ENCODE measurements at regions of chr4 and their contacts with region 1.

Region 1: GRCh38 chr4:142353149-142353738 is 492.9 kb downstream of the INPP4B start:
- DNase-seq: no peak
- ATAC-seq: peak; percentile 34
- H3K4me3 Mint-ChIP-seq: no peak overlapping the region
- H3K27ac Mint-ChIP-seq: peak overlapping the region; percentile 84
- H3K4me1 Mint-ChIP-seq: peaks cover 94% of the 10 kb centered on the region
- H3K27me3 Mint-ChIP-seq: no peaks in the 10 kb centered on the region
- CTCF ChIP-seq: peak; percentile 96

Region 2: GRCh38 chr4:142081025-142081424 is 272.2 kb before region 1 on chr4:
- CTCF ChIA-PET with region 1: no interaction called
- POLR2A ChIA-PET with region 1: no interaction called
- intact Hi-C with region 1: no loop called
- DNase-seq: no peak
- ATAC-seq: no peak
- H3K4me3 Mint-ChIP-seq: no peak overlapping the region
- H3K27ac Mint-ChIP-seq: no peak overlapping the region
- H3K4me1 Mint-ChIP-seq: no peaks in the 10 kb centered on the region
- H3K27me3 Mint-ChIP-seq: no peaks in the 10 kb centered on the region
- CTCF ChIP-seq: no peak

Region 3: GRCh38 chr4:142339053-142339452 is 14.2 kb before region 1 on chr4:
- CTCF ChIA-PET with region 1: interaction called, 26 read pairs
- POLR2A ChIA-PET with region 1: interaction called, 4 read pairs
- intact Hi-C with region 1: no loop called
- DNase-seq: no peak
- ATAC-seq: no peak
- H3K4me3 Mint-ChIP-seq: no peak overlapping the region
- H3K27ac Mint-ChIP-seq: no peak overlapping the region
- H3K4me1 Mint-ChIP-seq: peaks cover 24% of the 10 kb centered on the region
- H3K27me3 Mint-ChIP-seq: no peaks in the 10 kb centered on the region
- CTCF ChIP-seq: no peak

Region 4: GRCh38 chr4:142372530-142373260 is 19.5 kb after region 1 on chr4:
- CTCF ChIA-PET with region 1: interaction called, 48 read pairs
- POLR2A ChIA-PET with region 1: interaction called, 7 read pairs
- intact Hi-C with region 1: no loop called
- DNase-seq: no peak
- ATAC-seq: no peak
- H3K4me3 Mint-ChIP-seq: peak overlapping the region; percentile 33
- H3K27ac Mint-ChIP-seq: peak overlapping the region; percentile 79
- H3K4me1 Mint-ChIP-seq: peaks cover 71% of the 10 kb centered on the region
- H3K27me3 Mint-ChIP-seq: no peaks in the 10 kb centered on the region
- CTCF ChIP-seq: no peak

Region 5: DNA sequence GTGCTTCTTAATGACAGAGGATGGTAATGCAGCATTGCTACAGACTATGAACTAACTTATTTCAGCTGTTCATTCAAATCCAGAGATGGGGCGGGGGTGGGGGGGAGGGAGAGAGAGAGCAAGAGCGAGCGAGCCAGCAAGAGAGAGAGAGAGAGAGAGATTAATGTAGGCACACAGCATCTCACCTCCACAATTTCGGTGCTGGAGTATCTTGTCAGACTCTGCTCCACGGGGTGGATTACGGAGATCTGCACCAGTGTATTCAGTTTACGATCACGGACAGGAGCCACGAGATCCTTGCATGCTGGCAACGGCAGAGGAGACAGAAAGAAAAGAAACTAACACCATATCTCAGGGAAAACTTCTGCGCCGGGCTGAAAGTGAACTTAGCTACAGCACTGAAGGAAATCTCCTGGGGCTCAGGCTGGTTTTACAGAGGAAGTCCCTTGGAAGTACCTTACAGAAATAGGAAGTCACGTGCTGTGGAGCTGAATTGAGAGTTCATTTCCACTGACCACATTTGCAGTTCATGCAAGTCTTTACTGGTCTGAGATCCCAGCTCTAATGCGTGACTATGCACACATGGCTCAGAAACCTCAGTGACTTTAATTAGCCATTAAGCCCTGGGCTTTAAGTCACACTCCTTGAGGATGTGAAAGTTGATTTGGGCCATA is 51.9 kb after region 1 on chr4:
- CTCF ChIA-PET with region 1: interaction called, 60 read pairs
- POLR2A ChIA-PET with region 1: interaction called, 9 read pairs
- intact Hi-C with region 1: loop called (anchors 5 kb)
- DNase-seq: peak; percentile 74
- ATAC-seq: peak; percentile 59
- H3K4me3 Mint-ChIP-seq: peak overlapping the region; percentile 88
- H3K27ac Mint-ChIP-seq: peak overlapping the region; percentile 98
- H3K4me1 Mint-ChIP-seq: peaks cover 66% of the 10 kb centered on the region
- H3K27me3 Mint-ChIP-seq: no peaks in the 10 kb centered on the region
- CTCF ChIP-seq: no peak

Region 6: GRCh38 chr4:142493249-142494110 is 140.2 kb after region 1 on chr4:
- CTCF ChIA-PET with region 1: no interaction called
- POLR2A ChIA-PET with region 1: no interaction called
- intact Hi-C with region 1: no loop called
- DNase-seq: no peak
- ATAC-seq: no peak
- H3K4me3 Mint-ChIP-seq: no peak overlapping the region
- H3K27ac Mint-ChIP-seq: no peak overlapping the region
- H3K4me1 Mint-ChIP-seq: no peaks in the 10 kb centered on the region
- H3K27me3 Mint-ChIP-seq: no peaks in the 10 kb centered on the region
- CTCF ChIP-seq: no peak

Region 7: GRCh38 chr4:142719854-142720541 is 366.8 kb after region 1 on chr4:
- CTCF ChIA-PET with region 1: interaction called, 7 read pairs
- POLR2A ChIA-PET with region 1: no interaction called
- intact Hi-C with region 1: loop called (anchors 10 kb)
- DNase-seq: no peak
- ATAC-seq: peak; percentile 65
- H3K4me3 Mint-ChIP-seq: no peak overlapping the region
- H3K27ac Mint-ChIP-seq: no peak overlapping the region
- H3K4me1 Mint-ChIP-seq: peaks cover 8% of the 10 kb centered on the region
- H3K27me3 Mint-ChIP-seq: no peaks in the 10 kb centered on the region
- CTCF ChIP-seq: peak; percentile 74

Measured in activated CD8-positive, alpha-beta T cell treated with anti-CD3 and anti-CD28 coated beads for 36 hours (primary cell).